Ovary (tissue), 10 donors: ENCODE measurements at regions of chr7 and their contacts with region 1.

Region 1: GRCh38 chr7:85023045-85023712 is 163.7 kb downstream of the SEMA3D start:
- DNase-seq: peak in 1 of 5 donors; percentile 18
- H3K4me3 ChIP-seq: no peak overlapping the region
- H3K27ac ChIP-seq: no peak overlapping the region
- H3K4me1 ChIP-seq: no peaks in the 10 kb centered on the region
- H3K27me3 ChIP-seq: no peaks in the 10 kb centered on the region
- CTCF ChIP-seq: peak in 1 of 3 donors; percentile 45
- EP300 ChIP-seq: no peak
- POLR2A ChIP-seq: no peak

Region 2: DNA sequence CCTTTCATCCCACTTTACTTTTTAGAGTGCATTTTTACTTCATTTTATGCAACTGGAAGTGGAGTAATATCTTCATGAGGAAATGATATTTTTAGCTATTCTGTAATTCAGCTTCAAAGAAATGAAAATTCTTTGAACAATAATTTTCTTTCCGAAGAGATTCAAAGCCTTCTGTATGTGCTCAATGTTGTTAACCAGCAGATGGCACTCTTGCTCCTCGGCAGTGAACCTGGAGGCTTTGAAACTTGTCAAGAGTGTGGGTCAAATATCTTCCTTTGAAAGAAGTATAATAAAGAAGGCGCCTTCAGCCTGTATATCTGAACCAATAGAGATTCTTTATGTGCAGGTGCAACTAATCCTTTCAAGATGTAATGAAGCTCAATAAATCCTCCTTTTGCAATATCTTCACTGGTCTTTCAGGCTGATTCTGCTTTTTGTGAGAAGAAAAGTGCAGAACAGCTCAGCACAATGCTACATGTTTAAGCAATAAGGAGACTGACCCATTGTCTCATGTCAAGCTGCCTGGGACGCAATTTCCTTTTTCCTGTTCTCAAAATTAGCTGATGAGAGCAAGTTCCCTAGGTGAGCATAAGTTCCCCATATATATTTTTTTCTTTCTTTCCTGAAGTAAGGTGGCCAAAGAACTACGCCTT is 1087.0 kb before region 1 on chr7:
- intact Hi-C with region 1: loop called in 1 of 4 experiments (anchors 10 kb)
- DNase-seq: peak in 3 of 5 donors; percentile 9 to 34 (median 34)
- H3K4me3 ChIP-seq: no peak overlapping the region
- H3K27ac ChIP-seq: no peak overlapping the region
- H3K4me1 ChIP-seq: no peaks in the 10 kb centered on the region
- H3K27me3 ChIP-seq: no peaks in the 10 kb centered on the region
- CTCF ChIP-seq: no peak
- EP300 ChIP-seq: no peak
- POLR2A ChIP-seq: no peak

Region 3: GRCh38 chr7:83976295-83976694 is 1046.9 kb before region 1 on chr7:
- intact Hi-C with region 1: loop called in 1 of 4 experiments (anchors 10 kb)
- DNase-seq: no peak
- H3K4me3 ChIP-seq: no peak overlapping the region
- H3K27ac ChIP-seq: no peak overlapping the region
- H3K4me1 ChIP-seq: no peaks in the 10 kb centered on the region
- H3K27me3 ChIP-seq: no peaks in the 10 kb centered on the region
- CTCF ChIP-seq: peak in 1 of 3 donors; percentile 34
- EP300 ChIP-seq: no peak
- POLR2A ChIP-seq: no peak